ENCODE measurements at regions of chrX and their contacts with region 1.

Region 1: DNA sequence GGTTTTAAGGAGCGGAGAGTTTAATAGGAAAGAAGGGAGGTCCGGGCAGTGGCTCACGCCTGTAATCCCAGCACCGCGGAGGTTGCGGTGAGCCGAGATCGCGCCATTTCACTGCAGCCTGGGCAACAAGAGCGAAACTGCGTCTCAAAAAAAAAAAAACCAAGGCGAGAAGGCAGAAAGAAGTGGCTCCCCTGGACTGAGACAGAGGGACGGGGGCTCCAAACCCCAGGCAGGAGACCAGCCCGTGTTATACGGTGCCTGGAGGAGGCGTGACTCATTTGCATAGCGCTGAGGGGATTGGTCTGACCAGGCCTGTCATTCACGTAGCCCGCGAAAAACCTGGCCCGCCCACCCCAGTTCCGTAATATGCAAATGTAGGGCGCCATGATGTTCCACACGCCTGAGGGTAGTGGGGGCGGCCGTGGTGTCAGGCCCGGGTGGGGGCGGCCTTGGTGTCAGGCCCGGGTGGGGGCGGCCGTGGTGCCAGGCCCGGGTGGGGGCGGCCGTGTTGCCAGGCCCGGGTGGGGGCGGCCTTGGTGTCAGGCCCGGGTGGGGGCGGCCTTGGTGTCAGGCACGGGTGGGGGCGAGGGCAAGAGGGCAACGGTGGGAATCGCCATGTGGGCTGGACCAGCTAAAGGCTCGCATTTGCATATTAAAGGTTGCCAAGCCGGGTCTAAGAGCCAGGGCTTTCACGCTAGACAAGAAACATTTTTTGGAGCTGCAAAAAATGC is 2.1 kb downstream of the PLCXD1 start:
- DNase-seq: peak; percentile 88 to 92
- ATAC-seq: peak; percentile 98 to 100 (median 99)
- H3K4me3 ChIP-seq: peak overlapping the region; percentile 74
- H3K27ac ChIP-seq: no peak overlapping the region
- H3K4me1 ChIP-seq: no peaks in the 10 kb centered on the region
- H3K27me3 ChIP-seq: no peaks in the 10 kb centered on the region
- CTCF ChIP-seq: no peak

Region 2: GRCh38 chrX:250965-251364 is 32.3 kb before region 1 on chrX:
- intact Hi-C with region 1: no loop called
- DNase-seq: no peak
- ATAC-seq: no peak
- H3K4me3 ChIP-seq: no peak overlapping the region
- H3K27ac ChIP-seq: no peak overlapping the region
- H3K4me1 ChIP-seq: no peaks in the 10 kb centered on the region
- H3K27me3 ChIP-seq: peaks cover 0 to 2% (median 0%) of the 10 kb centered on the region in 3 donors
- CTCF ChIP-seq: no peak

Region 3: GRCh38 chrX:261167-261918 is 21.9 kb before region 1 on chrX:
- intact Hi-C with region 1: no loop called
- DNase-seq: peak in 1 of 2 donors; percentile 46
- ATAC-seq: no peak
- H3K4me3 ChIP-seq: no peak overlapping the region
- H3K27ac ChIP-seq: no peak overlapping the region
- H3K4me1 ChIP-seq: no peaks in the 10 kb centered on the region
- H3K27me3 ChIP-seq: peaks cover 0 to 10% (median 3%) of the 10 kb centered on the region in 3 donors
- CTCF ChIP-seq: no peak

Region 4: GRCh38 chrX:318739-319578 is 35.7 kb after region 1 on chrX and contains the start of gene GTPBP6:
- intact Hi-C with region 1: loop called in 1 of 2 experiments (anchors 5 kb)
- DNase-seq: peak; percentile 100
- ATAC-seq: peak; percentile 84 to 92 (median 88)
- H3K4me3 ChIP-seq: peak within 1 kb of the TSS; percentile 94
- H3K27ac ChIP-seq: peak within 1 kb of the TSS; percentile 95
- H3K4me1 ChIP-seq: no peaks in the 10 kb centered on the region
- H3K27me3 ChIP-seq: no peaks in the 10 kb centered on the region
- CTCF ChIP-seq: peak; percentile 19
- total RNA-seq, gene GTPBP6: 48.5 to 54.5 (median 50.9) TPM

Region 5: GRCh38 chrX:386768-387575 is 103.7 kb after region 1 on chrX and contains the start of gene PPP2R3B:
- intact Hi-C with region 1: no loop called
- DNase-seq: peak; percentile 99 to 100
- ATAC-seq: peak; percentile 100
- H3K4me3 ChIP-seq: peak within 1 kb of the TSS; percentile 87
- H3K27ac ChIP-seq: peak within 1 kb of the TSS; percentile 99
- H3K4me1 ChIP-seq: no peaks in the 10 kb centered on the region
- H3K27me3 ChIP-seq: no peaks in the 10 kb centered on the region
- CTCF ChIP-seq: no peak
- total RNA-seq, gene PPP2R3B: 77.2 to 156 (median 98.6) TPM

Region 6: GRCh38 chrX:896256-896655 is 613.0 kb after region 1 on chrX:
- intact Hi-C with region 1: no loop called
- DNase-seq: no peak
- ATAC-seq: no peak
- H3K4me3 ChIP-seq: no peak overlapping the region
- H3K27ac ChIP-seq: no peak overlapping the region
- H3K4me1 ChIP-seq: no peaks in the 10 kb centered on the region
- H3K27me3 ChIP-seq: peaks cover 0 to 2% (median 0%) of the 10 kb centered on the region in 3 donors
- CTCF ChIP-seq: no peak